Natural killer cell (primary cell): ENCODE measurements at regions of chr4 and their contacts with region 1.

Region 1: DNA sequence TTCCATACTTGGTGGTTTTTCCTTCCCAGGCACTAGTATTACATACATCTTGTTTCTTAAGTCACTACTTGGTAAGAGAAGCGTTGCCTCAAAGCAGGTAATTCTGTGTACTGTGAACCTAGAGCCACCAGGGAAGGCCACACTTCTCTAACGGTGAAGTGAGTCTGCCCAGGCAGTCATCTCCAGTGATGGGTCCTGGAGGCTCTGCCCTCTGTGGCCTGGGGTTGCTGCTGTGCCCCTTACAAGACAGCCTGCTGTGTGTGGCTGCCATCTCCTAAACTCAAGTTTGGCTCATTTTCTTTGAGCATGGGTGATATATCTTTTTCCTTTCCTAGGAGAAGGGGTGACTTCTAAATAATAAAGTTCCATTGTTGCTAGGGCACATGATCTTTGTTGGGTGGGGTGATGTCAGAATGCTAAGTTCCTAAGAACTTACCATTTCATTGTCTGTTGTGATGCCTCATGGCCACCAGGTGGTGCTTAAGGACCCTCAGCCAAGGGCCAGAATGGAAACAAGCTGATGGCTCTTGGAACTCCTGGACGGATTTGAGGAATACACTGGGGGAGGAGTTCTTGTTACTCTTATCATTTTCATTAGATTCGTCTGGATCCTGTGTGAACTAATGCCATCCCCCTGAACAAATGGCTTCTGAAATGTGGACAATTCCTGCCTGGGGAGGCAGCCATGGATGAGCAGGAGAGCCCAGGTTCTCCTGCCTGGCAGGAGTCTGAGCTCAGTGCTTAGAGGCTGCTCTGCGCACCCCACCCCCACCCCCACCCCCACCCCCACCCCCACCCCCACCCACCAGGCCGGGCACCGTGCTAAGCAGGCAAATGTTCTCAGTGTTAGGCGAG is 41.1 kb upstream of the WDR1 start:
- DNase-seq: peak in 1 of 2 donors; percentile 67
- ATAC-seq: peak; percentile 64 to 71 (median 65)
- H3K4me3 ChIP-seq: no peak overlapping the region
- H3K4me3 Mint-ChIP-seq: no peak overlapping the region
- H3K27ac ChIP-seq: no peak overlapping the region
- H3K27ac Mint-ChIP-seq: no peak overlapping the region
- H3K4me1 ChIP-seq: no peaks in the 10 kb centered on the region
- H3K4me1 Mint-ChIP-seq: peaks cover 0 to 11% of the 10 kb centered on the region in 2 donors
- H3K27me3 ChIP-seq: no peaks in the 10 kb centered on the region
- H3K27me3 Mint-ChIP-seq: peaks cover 2 to 6% of the 10 kb centered on the region in 2 donors
- CTCF ChIP-seq: peak; percentile 75

Region 2: DNA sequence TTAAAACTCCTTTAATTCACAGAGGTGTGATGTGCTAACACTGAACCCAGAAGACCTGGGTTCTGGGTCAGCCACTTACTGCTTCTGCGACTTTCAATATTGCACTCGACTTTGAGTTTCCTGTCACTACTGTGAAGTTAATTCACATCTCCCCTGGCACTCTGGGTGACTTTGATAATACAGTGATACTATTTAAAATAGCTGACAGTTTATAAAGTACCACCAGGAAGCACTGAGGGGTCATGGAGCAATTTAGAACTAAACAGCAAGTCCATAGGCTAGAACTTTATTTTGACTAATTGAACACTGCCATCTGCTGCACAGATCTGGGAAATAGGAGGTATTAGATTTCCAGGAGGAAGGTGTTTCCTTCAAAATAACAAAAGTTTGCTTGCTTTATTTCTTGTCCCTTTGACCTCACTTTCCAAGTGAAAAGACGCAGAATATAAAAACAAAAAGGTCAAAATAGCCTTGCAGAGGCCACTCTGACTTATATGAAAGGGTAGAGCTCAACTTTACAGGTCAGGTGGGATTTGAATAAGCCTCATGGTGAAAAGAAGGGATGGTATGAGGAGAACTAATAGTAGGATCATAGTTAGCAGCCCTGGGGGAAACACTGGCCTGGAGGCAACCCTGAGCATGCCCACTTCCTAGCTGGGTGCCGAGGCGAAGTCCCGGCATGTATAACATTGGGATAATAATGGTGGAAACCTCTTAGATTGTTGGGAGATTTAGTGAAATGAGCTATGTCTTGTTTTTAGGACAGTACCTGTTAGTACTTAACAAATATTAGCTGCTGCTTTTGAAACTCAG is 246.1 kb after region 1 on chr4:
- intact Hi-C with region 1: loop called (anchors 2 kb)
- DNase-seq: peak in 1 of 2 donors; percentile 50
- ATAC-seq: peak in 1 of 3 donors; percentile 36
- H3K4me3 ChIP-seq: no peak overlapping the region
- H3K4me3 Mint-ChIP-seq: no peak overlapping the region
- H3K27ac ChIP-seq: no peak overlapping the region
- H3K27ac Mint-ChIP-seq: no peak overlapping the region
- H3K4me1 ChIP-seq: no peaks in the 10 kb centered on the region
- H3K4me1 Mint-ChIP-seq: no peaks in the 10 kb centered on the region
- H3K27me3 ChIP-seq: no peaks in the 10 kb centered on the region
- H3K27me3 Mint-ChIP-seq: peaks cover 3 to 11% of the 10 kb centered on the region in 2 donors
- CTCF ChIP-seq: peak; percentile 41